Heart right ventricle (tissue), 16 donors: ENCODE measurements at regions of chr14 and their contacts with region 1.

Region 1: GRCh38 chr14:30223385-30223813 is 295.8 kb upstream of the PRKD1 start:
- DNase-seq: peak; percentile 21 to 32
- ATAC-seq: peak; percentile 57 to 92 (median 72)
- H3K4me3 ChIP-seq: no peak overlapping the region
- H3K27ac ChIP-seq: peak overlapping the region in 1 of 10 donors; percentile 50
- H3K4me1 ChIP-seq: peaks cover 0 to 51% (median 16%) of the 10 kb centered on the region in 9 donors
- H3K27me3 ChIP-seq: no peaks in the 10 kb centered on the region
- CTCF ChIP-seq: no peak

Region 2: DNA sequence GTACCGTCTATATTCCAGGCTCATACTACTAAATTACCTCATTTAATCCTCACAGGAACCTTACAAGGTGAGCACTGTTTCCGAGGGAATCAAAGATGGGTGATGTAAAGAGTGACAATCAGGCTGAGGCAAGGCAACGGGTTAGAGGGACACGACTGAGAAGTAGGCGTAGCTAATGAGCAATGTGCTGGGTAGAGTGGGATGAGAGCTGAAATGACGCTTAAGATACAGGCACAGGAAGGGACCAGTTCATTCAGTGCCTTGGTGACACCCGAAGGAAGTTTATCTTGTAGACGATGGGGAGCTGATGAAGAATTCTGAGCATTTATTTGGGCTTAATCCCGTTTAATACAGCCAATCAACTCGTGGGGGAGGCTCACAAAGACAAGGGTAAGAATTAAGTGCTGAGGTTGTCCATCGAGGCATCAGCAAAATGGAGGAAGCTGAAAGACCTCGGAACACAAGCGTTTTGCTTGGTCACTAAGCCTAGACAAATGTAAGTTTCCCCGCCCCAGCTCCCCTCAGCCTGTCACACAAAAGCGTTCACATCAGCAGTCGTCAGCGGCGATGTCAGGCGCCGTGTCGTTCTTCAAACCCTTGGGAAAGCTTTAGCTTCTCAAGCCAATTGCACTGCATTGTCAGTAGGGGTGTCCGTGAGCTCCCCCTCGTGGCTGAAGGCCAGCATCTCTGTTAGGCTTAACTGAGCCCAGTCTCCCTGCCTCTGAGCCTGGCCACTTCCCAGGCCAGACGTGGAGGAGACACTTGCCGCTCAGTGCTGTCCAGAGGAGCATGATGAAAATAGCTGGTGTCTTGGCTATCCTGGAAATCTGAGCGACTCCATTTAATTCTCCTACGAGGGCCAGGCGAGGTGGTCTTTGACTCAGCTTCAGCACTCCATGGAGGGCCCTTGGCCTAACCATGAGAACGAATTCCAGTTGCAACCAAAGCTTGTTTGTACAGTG is 47.1 kb after region 1 on chr14:
- intact Hi-C with region 1: loop called in 1 of 10 experiments (anchors 5 kb)
- DNase-seq: peak; percentile 76 to 80
- ATAC-seq: peak; percentile 70 to 98 (median 92)
- H3K4me3 ChIP-seq: peak overlapping the region in 6 of 10 donors; percentile 20 to 35 (median 27)
- H3K27ac ChIP-seq: no peak overlapping the region
- H3K4me1 ChIP-seq: peaks cover 0 to 7% (median 0%) of the 10 kb centered on the region in 9 donors
- H3K27me3 ChIP-seq: peaks cover 0 to 10% (median 0%) of the 10 kb centered on the region in 7 donors
- CTCF ChIP-seq: peak; percentile 77 to 94 (median 84)

Region 3: DNA sequence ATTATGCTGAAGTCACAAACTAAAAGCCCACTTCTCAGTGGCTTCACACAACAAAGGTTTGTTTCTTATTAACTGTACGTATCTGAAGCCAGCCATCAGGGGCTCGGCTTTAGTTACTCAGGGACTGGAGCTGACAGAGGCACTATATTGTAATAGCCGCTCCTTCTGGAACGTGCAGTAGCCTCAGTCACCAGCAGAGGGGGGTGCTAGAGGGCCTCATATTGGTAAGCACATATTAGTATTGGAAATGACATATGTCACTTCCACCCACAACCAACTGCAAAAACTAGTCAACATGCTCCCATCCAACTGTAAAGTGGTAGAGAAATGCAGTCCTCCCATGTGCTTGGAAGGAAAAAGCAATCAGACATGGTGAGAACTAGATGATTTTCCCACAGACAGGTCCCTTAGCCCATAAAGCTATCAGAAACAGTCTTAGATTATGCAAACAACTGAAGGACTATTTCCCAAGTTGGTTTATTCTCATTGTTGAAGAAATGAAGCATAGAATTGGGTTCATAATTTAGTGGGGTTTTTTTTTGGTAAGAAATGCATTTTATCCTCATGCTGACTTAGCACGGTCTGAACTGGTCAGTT is 152.0 kb after region 1 on chr14:
- intact Hi-C with region 1: no loop called
- DNase-seq: peak; percentile 30 to 42
- ATAC-seq: peak in 3 of 8 donors; percentile 40 to 74 (median 49)
- H3K4me3 ChIP-seq: no peak overlapping the region
- H3K27ac ChIP-seq: no peak overlapping the region
- H3K4me1 ChIP-seq: no peaks in the 10 kb centered on the region
- H3K27me3 ChIP-seq: peaks cover 0 to 8% (median 2%) of the 10 kb centered on the region in 7 donors
- CTCF ChIP-seq: peak; percentile 34 to 81 (median 74)